Activated CD4-positive, alpha-beta T cell treated with anti-CD3 and anti-CD28 coated beads for 36 hours (primary cell): ENCODE measurements at regions of chr3 and their contacts with region 1.

Region 1: GRCh38 chr3:190491533-190492054 is 22.3 kb upstream of the IL1RAP start:
- DNase-seq: peak; percentile 41
- ATAC-seq: peak; percentile 94
- H3K4me3 Mint-ChIP-seq: no peak overlapping the region
- H3K27ac Mint-ChIP-seq: no peak overlapping the region
- H3K4me1 Mint-ChIP-seq: peaks cover 23% of the 10 kb centered on the region
- H3K27me3 Mint-ChIP-seq: peaks cover 57% of the 10 kb centered on the region

Region 2: DNA sequence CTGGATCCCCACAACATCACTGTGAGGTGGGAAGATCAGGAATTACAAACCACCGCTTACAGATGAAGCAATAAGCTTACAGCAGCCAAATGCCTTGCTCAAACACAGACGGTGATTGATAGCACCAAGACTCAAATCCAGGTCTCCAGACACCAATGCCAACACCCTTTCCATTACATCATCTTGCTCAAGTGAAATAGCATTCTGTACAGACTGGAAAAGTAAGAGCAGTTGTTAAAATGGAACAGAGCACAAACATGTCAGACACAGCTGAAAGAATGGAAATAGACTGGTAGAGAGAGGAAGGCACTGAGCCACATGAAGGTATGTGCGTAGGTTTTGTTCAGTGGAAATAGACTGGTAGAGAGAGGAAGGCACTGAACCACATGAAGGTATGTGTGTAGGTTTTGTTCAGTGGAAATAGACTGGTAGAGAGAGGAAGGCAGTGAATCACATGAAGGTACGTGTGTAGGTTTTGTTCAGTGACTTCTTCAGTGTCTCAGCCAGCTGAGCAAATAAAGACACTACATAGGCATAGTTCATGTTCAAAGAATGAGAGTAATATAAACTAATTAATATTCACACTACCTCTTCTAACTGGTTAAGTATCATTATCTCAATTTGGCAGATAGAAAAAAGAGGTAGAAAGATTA is 185.0 kb before region 1 on chr3:
- CTCF ChIA-PET with region 1: no interaction called
- POLR2A ChIA-PET with region 1: no interaction called
- intact Hi-C with region 1: loop called in 1 of 2 experiments (anchors 5 kb)
- DNase-seq: peak; percentile 53
- ATAC-seq: peak; percentile 94
- H3K4me3 Mint-ChIP-seq: peak overlapping the region; percentile 23
- H3K27ac Mint-ChIP-seq: peak overlapping the region; percentile 91
- H3K4me1 Mint-ChIP-seq: peaks cover 34% of the 10 kb centered on the region
- H3K27me3 Mint-ChIP-seq: peaks cover 6% of the 10 kb centered on the region

Region 3: DNA sequence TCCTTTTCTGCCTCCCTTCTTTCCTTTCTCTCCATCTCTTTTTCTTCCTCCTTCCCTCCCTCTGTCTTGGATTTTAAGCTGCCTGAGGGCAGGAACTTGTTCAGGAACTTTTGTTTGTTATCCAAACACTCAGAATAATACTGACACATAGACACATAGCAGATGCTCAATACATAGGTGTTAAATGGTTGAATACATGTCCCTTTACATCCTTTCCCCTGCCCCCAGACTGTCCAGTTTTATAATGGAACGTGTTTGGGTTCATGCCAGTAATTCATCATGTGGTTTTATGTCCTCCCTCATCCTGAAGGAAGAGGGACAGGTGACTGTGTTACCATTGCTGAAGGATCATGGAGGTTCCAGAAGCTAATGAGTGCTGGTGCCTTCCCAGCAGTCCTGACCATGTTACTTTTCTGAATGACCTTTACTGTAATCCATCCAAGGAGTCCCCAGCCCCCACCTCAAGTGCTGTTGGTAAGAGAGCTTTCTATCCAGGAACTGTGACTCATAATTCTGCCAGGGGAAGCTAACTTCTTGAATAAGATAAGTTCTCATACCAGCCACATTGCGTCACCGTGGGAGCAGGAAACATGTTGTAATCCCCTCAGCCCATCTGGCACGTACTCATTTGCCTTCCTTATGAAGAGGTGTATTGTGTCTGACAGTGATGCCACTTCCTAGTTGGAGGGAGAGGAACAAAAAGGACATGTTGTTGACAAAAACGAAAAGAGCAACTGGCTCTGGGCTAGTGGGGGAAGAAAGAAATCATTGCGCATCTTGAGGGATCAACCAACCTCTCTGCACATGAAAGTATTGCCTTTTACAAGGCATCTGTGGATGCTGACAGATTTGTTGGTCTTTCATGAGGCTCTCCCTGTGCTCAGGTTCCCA is 74.7 kb after region 1 on chr3:
- CTCF ChIA-PET with region 1: no interaction called
- POLR2A ChIA-PET with region 1: no interaction called
- intact Hi-C with region 1: loop called (anchors 1 kb)
- DNase-seq: peak; percentile 92
- ATAC-seq: peak; percentile 88
- H3K4me3 Mint-ChIP-seq: no peak overlapping the region
- H3K27ac Mint-ChIP-seq: peak overlapping the region; percentile 97
- H3K4me1 Mint-ChIP-seq: peaks cover 61% of the 10 kb centered on the region
- H3K27me3 Mint-ChIP-seq: no peaks in the 10 kb centered on the region

Region 4: GRCh38 chr3:190617185-190617584 is 125.6 kb after region 1 on chr3:
- CTCF ChIA-PET with region 1: no interaction called
- POLR2A ChIA-PET with region 1: no interaction called
- intact Hi-C with region 1: loop called (anchors 1 to 2 kb)
- DNase-seq: peak; percentile 69
- ATAC-seq: peak; percentile 48
- H3K4me3 Mint-ChIP-seq: no peak overlapping the region
- H3K27ac Mint-ChIP-seq: peak overlapping the region; percentile 91
- H3K4me1 Mint-ChIP-seq: peaks cover 66% of the 10 kb centered on the region
- H3K27me3 Mint-ChIP-seq: no peaks in the 10 kb centered on the region

Region 5: DNA sequence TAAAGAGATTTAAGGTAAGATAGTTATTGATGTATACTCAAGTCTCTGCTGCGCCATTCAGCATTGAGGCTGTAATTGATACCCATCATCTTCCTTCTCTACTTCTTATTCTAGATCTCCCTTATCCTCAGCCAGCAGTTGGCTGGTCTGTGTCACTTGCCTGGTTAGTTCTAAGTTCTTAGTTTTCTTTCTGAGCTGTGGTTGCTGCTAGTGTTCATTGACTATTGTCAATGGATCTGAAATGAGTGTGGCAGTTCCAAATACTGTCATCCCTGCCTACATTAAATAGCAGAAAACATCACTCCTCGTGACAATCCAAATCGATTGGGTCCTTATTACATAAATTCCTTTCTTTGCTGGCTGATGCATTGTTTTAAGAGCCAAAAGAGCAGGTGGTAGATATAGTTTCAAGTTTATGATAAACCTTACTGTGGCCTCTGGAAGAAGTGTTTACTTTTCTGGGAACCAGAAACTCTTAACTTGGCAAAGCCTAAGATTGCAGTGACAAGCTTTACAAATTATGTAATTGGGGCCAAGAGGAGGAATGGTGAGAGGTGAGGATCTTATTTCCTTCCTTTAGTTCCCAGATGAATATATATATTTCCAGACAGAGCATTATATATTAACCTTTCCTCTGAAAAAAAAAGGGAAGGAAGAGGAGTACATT is 202.9 kb after region 1 on chr3:
- CTCF ChIA-PET with region 1: no interaction called
- POLR2A ChIA-PET with region 1: no interaction called
- intact Hi-C with region 1: loop called in 1 of 2 experiments (anchors 1 kb)
- DNase-seq: no peak
- ATAC-seq: no peak
- H3K4me3 Mint-ChIP-seq: no peak overlapping the region
- H3K27ac Mint-ChIP-seq: no peak overlapping the region
- H3K4me1 Mint-ChIP-seq: no peaks in the 10 kb centered on the region
- H3K27me3 Mint-ChIP-seq: peaks cover 10% of the 10 kb centered on the region